ENCODE measurements at regions of chr6 and their contacts with region 1.

Region 1: DNA sequence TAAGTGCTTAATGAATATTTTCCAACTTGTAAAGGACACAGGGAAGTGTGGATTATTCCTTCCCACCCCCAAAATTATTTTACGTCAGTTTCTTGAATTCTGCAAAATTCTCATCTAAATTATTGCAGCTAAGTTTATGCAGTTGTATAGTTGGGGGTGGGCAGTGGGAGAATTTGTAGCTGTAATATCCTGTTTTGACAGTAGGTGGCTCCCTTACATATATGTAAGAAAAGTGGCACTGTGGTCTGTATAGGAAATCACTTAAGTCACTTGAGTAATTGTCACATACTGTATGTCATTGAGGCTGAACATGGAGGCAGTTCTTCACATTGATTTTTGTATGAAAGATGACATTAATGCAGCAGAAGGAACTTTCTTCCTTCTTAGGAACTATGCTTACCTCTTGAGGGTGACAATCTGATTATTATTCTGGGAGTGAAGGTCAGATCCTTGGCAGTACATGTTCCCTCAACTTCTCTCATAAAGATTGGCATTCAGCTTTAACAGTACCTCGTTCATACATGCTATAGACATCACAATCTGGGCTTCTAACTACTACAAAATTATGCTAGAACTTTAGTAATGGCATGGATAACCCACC is 14.7 kb upstream of the CFAP206 start:
- DNase-seq: peak; percentile 50
- H3K4me3 ChIP-seq: no peak overlapping the region; a peak in 1 of 4 replicates
- H3K27ac ChIP-seq: no peak overlapping the region
- H3K4me1 ChIP-seq: peaks cover 0 to 8% of the 10 kb centered on the region in 2 experiments; a peak in 1 of 4 replicates
- H3K27me3 ChIP-seq: no peaks in the 10 kb centered on the region
- CTCF ChIP-seq: peak; percentile 77
- EP300 ChIP-seq: no peak
- RAD21 ChIP-seq: peak; percentile 85

Region 2: GRCh38 chr6:87066449-87067333 is 326.4 kb before region 1 on chr6:
- CTCF ChIA-PET with region 1: interaction called, 17 read pairs
- POLR2A ChIA-PET with region 1: no interaction called
- DNase-seq: peak; percentile 59
- H3K4me3 ChIP-seq: peak overlapping the region in 1 of 2 experiments; percentile 17; a peak in 1 of 4 replicates
- H3K27ac ChIP-seq: no peak overlapping the region
- H3K4me1 ChIP-seq: peaks cover 0 to 6% of the 10 kb centered on the region in 2 experiments; a peak in 1 of 4 replicates
- H3K27me3 ChIP-seq: no peaks in the 10 kb centered on the region
- CTCF ChIP-seq: peak; percentile 89
- EP300 ChIP-seq: no peak
- RAD21 ChIP-seq: peak; percentile 94

Region 3: GRCh38 chr6:87407901-87408720 is 15.0 kb after region 1 on chr6 and contains the start of gene CFAP206:
- CTCF ChIA-PET with region 1: interaction called, 25 read pairs
- POLR2A ChIA-PET with region 1: interaction called, 3 read pairs
- DNase-seq: peak; percentile 93
- H3K4me3 ChIP-seq: peak within 1 kb of the TSS; percentile 93 to 96
- H3K27ac ChIP-seq: peak within 1 kb of the TSS; percentile 87 to 95
- H3K4me1 ChIP-seq: peaks cover 0 to 2% of the 10 kb centered on the region in 2 experiments; a peak in 1 of 4 replicates
- H3K27me3 ChIP-seq: no peaks in the 10 kb centered on the region
- CTCF ChIP-seq: peak; percentile 29
- EP300 ChIP-seq: no peak
- RAD21 ChIP-seq: no peak
- polyA plus RNA-seq, gene CFAP206: 0.46 and 0.78 TPM in 2 replicates

Region 4: DNA sequence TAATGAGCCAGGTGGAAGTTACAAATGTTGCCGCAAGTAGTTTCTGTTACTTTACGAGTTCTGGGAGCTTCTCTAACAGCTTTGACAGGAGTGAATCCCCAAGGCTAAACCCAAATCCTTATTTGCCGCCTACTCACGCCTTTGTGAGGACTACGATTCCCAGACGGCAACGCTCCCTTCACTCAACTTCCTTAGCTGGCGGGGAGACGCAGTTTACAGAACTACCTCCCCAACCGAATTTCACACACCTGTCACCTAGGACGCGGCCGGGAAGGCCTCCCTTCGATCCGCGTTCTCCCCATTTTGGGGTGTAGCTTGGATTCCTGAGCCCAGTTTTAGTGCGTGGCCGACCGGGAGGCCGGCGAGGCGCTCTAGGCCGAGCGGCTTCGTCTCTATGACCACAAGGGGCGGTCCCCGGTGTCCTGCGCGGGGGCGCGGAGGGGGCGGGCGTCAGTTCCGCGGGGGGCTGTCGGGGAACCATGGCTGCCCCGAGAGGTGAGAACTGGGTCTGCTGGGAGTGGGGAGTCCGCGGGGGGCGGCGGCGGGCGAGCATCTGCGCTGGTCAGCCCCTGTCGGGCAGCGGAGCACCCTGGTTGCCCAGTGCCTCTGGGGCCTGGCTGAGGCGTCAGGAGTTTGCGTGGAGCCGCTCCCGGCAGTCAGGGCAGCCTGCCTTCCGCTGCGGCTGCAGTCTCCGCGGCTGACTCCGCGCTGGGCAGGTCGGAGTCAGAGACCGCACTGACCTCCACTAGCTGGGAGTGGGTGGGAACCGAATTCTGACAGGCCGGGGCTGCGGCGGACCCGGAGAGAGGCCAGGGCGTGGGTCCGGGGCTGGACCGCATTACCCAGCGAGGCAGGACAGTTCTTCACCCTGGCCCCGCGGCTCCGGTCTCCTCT is 79.7 kb after region 1 on chr6 and contains the start of gene SLC35A1:
- CTCF ChIA-PET with region 1: interaction called, 10 read pairs
- POLR2A ChIA-PET with region 1: no interaction called
- DNase-seq: peak; percentile 95
- H3K4me3 ChIP-seq: peak within 1 kb of the TSS; percentile 78 to 86
- H3K27ac ChIP-seq: peak within 1 kb of the TSS; percentile 65 to 97
- H3K4me1 ChIP-seq: peaks cover 0 to 9% of the 10 kb centered on the region in 2 experiments; a peak in 2 of 4 replicates
- H3K27me3 ChIP-seq: no peaks in the 10 kb centered on the region
- CTCF ChIP-seq: no peak
- EP300 ChIP-seq: no peak
- RAD21 ChIP-seq: no peak
- polyA plus RNA-seq, gene SLC35A1: 9.2 and 13.9 TPM in 2 replicates

Region 5: GRCh38 chr6:87504441-87504840 is 111.3 kb after region 1 on chr6:
- CTCF ChIA-PET with region 1: interaction called, 10 read pairs
- POLR2A ChIA-PET with region 1: no interaction called
- DNase-seq: no peak
- H3K4me3 ChIP-seq: no peak overlapping the region
- H3K27ac ChIP-seq: no peak overlapping the region
- H3K4me1 ChIP-seq: no peaks in the 10 kb centered on the region
- H3K27me3 ChIP-seq: no peaks in the 10 kb centered on the region
- CTCF ChIP-seq: no peak
- EP300 ChIP-seq: no peak
- RAD21 ChIP-seq: no peak